B cell (primary cell): ENCODE measurements at regions of chr12 and their contacts with region 1.

Region 1: DNA sequence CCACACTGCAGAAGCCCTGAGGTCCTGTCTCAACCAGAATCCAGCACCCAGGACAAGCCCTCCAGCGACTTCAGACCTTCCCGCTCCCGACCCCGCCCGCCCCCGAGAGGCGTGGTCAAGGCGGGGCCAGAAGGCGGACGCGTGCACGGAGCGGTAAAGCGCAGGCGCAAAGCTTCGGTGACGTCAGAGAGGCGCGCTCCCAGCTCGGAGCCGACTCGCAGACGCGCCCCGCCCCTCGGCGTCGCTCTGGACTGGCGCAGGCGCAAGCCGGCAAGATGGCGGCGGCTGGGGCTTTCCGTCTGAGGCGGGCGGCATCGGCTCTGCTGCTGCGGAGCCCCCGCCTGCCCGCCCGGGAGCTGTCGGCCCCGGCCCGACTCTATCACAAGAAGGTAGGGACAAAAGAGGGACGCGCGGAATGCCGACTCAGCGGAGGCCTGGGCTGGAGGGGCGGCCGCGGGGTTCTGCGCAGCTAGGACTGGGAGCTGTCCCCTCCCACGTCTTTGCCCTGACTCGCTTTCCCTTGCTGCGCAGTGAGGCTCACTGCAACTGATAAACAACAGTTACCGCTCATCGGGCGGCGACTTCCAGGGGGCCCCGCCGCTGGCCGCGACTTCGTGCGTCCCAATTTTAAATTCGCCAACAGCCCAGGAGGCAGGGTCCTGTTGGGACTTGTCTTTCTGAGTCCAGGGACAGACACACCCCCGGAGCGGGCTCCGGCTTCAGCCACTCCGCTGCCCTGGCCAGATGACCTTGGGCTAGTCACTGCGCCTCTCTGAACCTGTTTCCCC is at the start of gene ISCU:
- DNase-seq: peak; percentile 99
- ATAC-seq: peak; percentile 73
- H3K4me3 ChIP-seq: peak within 1 kb of the TSS; percentile 84 to 99 (median 98)
- H3K4me3 Mint-ChIP-seq: peak within 1 kb of the TSS; percentile 100
- H3K27ac ChIP-seq: peak within 1 kb of the TSS; percentile 94 to 97
- H3K27ac Mint-ChIP-seq: peak within 1 kb of the TSS; percentile 100
- H3K4me1 ChIP-seq: peaks cover 53 to 61% of the 10 kb centered on the region in 2 donors
- H3K4me1 Mint-ChIP-seq: peaks cover 72% of the 10 kb centered on the region
- H3K27me3 ChIP-seq: no peaks in the 10 kb centered on the region
- H3K27me3 Mint-ChIP-seq: no peaks in the 10 kb centered on the region
- CTCF ChIP-seq: no peak
- total RNA-seq, gene ISCU: 190 and 209 TPM in 2 replicates

Region 2: GRCh38 chr12:107685360-107686248 is 876.9 kb before region 1 on chr12 and contains the start of gene PWP1:
- CTCF ChIA-PET with region 1: no interaction called
- POLR2A ChIA-PET with region 1: no interaction called
- intact Hi-C with region 1: loop called (anchors 2 kb)
- DNase-seq: peak; percentile 98
- ATAC-seq: peak; percentile 91
- H3K4me3 ChIP-seq: peak within 1 kb of the TSS; percentile 69 to 96 (median 86)
- H3K4me3 Mint-ChIP-seq: peak within 1 kb of the TSS; percentile 96
- H3K27ac ChIP-seq: peak within 1 kb of the TSS; percentile 81 to 85
- H3K27ac Mint-ChIP-seq: peak within 1 kb of the TSS; percentile 98
- H3K4me1 ChIP-seq: peaks cover 16 to 22% of the 10 kb centered on the region in 2 donors
- H3K4me1 Mint-ChIP-seq: peaks cover 25% of the 10 kb centered on the region
- H3K27me3 ChIP-seq: no peaks in the 10 kb centered on the region
- H3K27me3 Mint-ChIP-seq: no peaks in the 10 kb centered on the region
- CTCF ChIP-seq: no peak
- total RNA-seq, gene PWP1: 51.2 and 54.8 TPM in 2 replicates

Region 3: DNA sequence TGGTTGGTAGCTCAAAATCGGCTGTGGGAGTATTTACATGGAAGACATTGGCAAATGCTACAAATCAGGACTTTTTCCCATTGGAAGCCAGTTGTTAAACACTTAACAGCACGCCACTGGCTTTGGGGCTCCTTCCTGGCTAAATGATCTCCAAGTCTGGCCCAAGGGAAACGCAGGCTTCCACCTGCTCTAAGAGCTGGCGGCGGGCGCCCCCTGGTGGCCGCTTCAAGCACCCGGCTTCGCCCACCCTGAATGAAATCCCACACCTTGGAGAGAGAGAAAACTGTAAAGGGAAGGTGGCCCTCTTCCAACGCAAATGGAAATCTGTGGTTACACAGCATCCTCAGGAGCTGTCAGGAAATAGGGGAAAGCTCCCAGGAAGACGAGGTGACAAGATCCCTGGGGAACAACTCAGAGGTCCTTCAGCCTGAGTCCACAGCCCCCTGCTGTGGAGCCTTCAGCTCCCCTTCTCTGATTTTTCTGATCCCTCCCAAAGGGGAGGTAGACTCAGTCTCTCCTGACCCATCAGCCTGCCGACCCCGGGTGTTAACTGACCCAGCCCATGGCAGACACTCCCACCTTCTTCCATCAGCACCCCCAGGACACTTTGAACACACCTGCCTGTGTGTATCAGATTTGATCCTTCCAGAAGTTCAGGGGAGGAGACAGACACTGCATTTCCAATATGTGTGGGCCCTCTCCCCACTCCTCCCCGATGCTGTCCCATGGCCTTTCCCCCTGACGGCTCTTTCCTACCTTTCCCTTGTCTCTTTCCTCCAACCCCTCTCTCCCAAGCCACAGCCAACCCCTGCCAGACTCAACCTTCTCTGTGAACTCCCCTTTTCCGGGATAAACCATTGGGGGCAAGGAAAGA is 55.8 kb after region 1 on chr12:
- CTCF ChIA-PET with region 1: interaction called, 424 read pairs
- POLR2A ChIA-PET with region 1: interaction called, 26 read pairs
- intact Hi-C with region 1: loop called (anchors 1 kb)
- DNase-seq: peak; percentile 88
- ATAC-seq: peak; percentile 35
- H3K4me3 ChIP-seq: no peak overlapping the region
- H3K4me3 Mint-ChIP-seq: no peak overlapping the region
- H3K27ac ChIP-seq: peak overlapping the region; percentile 80 to 93
- H3K27ac Mint-ChIP-seq: peak overlapping the region; percentile 98
- H3K4me1 ChIP-seq: peaks cover 41 to 49% of the 10 kb centered on the region in 2 donors
- H3K4me1 Mint-ChIP-seq: peaks cover 69% of the 10 kb centered on the region
- H3K27me3 ChIP-seq: no peaks in the 10 kb centered on the region
- H3K27me3 Mint-ChIP-seq: no peaks in the 10 kb centered on the region
- CTCF ChIP-seq: peak; percentile 98

Region 4: DNA sequence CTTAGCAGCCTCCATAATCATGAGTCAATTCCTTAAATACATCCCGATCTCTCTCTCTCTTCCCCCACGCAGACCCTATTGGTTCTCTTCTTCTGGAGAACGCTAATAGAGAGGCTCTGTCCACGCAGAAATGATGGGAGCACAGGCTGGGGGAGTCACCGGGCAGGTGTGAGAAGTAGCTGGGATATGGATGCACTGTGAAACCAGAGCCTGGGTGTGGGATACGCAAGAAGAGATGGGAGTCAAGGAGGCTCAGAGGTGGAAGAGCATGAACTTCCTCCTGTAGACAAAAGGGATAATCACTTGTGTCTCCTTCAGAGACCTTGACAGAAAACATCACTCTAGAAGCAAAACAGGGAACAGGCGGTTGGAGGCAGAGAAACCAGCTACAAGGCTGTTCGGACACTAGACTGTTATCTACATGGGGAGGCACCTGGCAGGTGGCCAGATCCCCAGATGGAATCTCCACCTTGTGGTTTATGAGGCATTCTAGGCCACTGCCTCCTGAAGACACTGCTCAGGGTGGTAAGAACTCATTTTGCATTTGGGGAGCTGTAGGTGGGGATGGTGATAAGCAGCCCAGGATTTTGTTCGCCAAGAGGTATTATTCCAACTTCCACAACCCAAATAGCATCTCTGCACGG is 78.4 kb after region 1 on chr12:
- CTCF ChIA-PET with region 1: interaction called, 200 read pairs
- POLR2A ChIA-PET with region 1: interaction called, 51 read pairs
- intact Hi-C with region 1: no loop called
- DNase-seq: peak; percentile 47
- ATAC-seq: no peak
- H3K4me3 ChIP-seq: no peak overlapping the region
- H3K4me3 Mint-ChIP-seq: peak overlapping the region; percentile 65
- H3K27ac ChIP-seq: peak overlapping the region; percentile 78 to 95
- H3K27ac Mint-ChIP-seq: peak overlapping the region; percentile 89
- H3K4me1 ChIP-seq: peaks cover 63 to 70% of the 10 kb centered on the region in 2 donors
- H3K4me1 Mint-ChIP-seq: peaks cover 89% of the 10 kb centered on the region
- H3K27me3 ChIP-seq: no peaks in the 10 kb centered on the region
- H3K27me3 Mint-ChIP-seq: no peaks in the 10 kb centered on the region
- CTCF ChIP-seq: no peak

Region 5: GRCh38 chr12:108856428-108857157 is 294.1 kb after region 1 on chr12:
- CTCF ChIA-PET with region 1: no interaction called
- POLR2A ChIA-PET with region 1: no interaction called
- intact Hi-C with region 1: loop called (anchors 2 kb)
- DNase-seq: peak; percentile 59
- ATAC-seq: peak; percentile 2
- H3K4me3 ChIP-seq: peak overlapping the region; percentile 43 to 76 (median 71)
- H3K4me3 Mint-ChIP-seq: peak overlapping the region; percentile 99
- H3K27ac ChIP-seq: peak overlapping the region in 1 of 2 donors; percentile 56
- H3K27ac Mint-ChIP-seq: peak overlapping the region; percentile 96
- H3K4me1 ChIP-seq: peaks cover 29 to 44% of the 10 kb centered on the region in 2 donors
- H3K4me1 Mint-ChIP-seq: peaks cover 52% of the 10 kb centered on the region
- H3K27me3 ChIP-seq: peaks cover 0 to 4% (median 0%) of the 10 kb centered on the region in 4 experiments
- H3K27me3 Mint-ChIP-seq: no peaks in the 10 kb centered on the region
- CTCF ChIP-seq: no peak

Region 6: GRCh38 chr12:108868781-108869180 is 306.2 kb after region 1 on chr12:
- CTCF ChIA-PET with region 1: no interaction called
- POLR2A ChIA-PET with region 1: no interaction called
- intact Hi-C with region 1: no loop called
- DNase-seq: no peak
- ATAC-seq: no peak
- H3K4me3 ChIP-seq: no peak overlapping the region
- H3K4me3 Mint-ChIP-seq: no peak overlapping the region
- H3K27ac ChIP-seq: no peak overlapping the region
- H3K27ac Mint-ChIP-seq: no peak overlapping the region
- H3K4me1 ChIP-seq: no peaks in the 10 kb centered on the region
- H3K4me1 Mint-ChIP-seq: no peaks in the 10 kb centered on the region
- H3K27me3 ChIP-seq: no peaks in the 10 kb centered on the region
- H3K27me3 Mint-ChIP-seq: no peaks in the 10 kb centered on the region
- CTCF ChIP-seq: no peak

Region 7: DNA sequence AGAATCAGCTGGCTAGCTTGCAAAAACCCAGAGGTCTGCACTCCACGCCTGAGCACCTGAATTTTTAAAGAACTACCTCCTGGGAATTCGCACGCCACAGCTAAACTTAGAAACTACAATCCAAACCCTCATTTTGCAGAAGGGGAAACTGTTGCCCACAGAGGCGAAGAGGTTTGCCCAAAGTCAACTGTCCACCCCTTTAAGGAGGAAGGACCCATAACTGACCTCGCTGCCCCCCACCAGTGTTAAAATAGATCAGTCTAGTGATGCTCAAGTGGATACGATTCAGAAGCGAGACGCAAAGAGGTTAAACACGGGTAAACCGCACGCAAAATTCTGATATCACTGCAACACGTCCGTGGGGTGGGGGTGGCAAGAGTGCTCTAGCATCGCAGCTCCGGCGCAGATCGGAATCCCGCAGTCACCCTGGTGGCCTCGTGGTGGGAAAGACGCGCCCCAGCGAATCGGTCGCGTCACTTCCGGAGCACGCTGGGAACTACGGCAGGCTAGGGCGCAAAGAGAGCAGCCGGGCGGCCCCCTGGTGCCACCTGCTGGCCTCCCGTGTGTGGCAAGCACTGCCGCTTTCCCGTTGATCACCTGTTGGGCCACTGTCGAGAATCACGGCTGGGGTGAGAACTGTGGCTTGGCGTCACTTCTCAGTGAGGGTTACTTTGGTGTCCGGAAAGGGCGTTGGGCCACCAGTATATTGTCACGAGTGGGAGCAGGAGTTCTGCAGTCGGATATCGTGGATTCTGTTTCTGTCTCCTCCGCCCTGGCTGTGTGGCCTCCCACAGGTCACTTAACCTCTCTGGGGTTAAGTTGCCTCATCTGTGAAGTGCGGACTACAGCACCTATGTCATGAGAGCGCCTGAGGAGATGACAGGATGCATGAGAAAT is 530.7 kb after region 1 on chr12 and contains the start of gene ALKBH2:
- CTCF ChIA-PET with region 1: interaction called, 3 read pairs
- POLR2A ChIA-PET with region 1: no interaction called
- intact Hi-C with region 1: loop called (anchors 2 kb)
- DNase-seq: peak; percentile 96
- ATAC-seq: peak; percentile 70
- H3K4me3 ChIP-seq: peak within 1 kb of the TSS; percentile 64 to 98 (median 85)
- H3K4me3 Mint-ChIP-seq: peak within 1 kb of the TSS; percentile 95
- H3K27ac ChIP-seq: peak within 1 kb of the TSS; percentile 58 to 78
- H3K27ac Mint-ChIP-seq: peak within 1 kb of the TSS; percentile 89
- H3K4me1 ChIP-seq: peaks cover 24 to 28% of the 10 kb centered on the region in 2 donors
- H3K4me1 Mint-ChIP-seq: peaks cover 34% of the 10 kb centered on the region
- H3K27me3 ChIP-seq: no peaks in the 10 kb centered on the region
- H3K27me3 Mint-ChIP-seq: no peaks in the 10 kb centered on the region
- CTCF ChIP-seq: peak; percentile 97
- total RNA-seq, gene ALKBH2: 14.5 and 14.6 TPM in 2 replicates

Region 8: DNA sequence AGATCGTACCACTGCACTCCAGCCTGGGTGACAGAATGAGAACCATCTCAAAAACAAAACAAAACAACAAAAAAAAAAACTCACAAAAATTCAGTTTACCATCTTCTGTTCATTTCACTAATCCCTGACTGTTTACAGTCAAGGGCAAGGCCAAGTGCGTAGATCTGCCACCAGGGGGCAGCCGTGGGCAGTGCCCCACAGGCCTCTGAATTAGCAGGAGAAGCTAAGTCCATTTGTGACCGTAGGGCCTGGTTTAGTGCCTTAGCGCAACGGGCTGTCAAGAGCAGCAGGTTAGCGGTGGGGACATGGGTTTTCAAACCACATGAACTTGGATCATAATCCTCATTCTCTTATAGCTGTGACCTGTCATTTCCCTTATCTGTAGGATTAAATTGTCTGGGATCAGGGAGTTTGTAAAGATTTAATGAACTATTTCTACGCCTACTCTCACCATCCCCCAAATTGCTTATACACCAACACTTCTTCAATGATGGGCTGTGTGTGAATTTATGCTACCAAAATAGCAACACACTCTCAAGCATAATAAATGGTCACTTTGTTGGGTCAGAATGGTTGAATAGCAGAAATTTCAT is 865.6 kb after region 1 on chr12:
- CTCF ChIA-PET with region 1: no interaction called
- POLR2A ChIA-PET with region 1: no interaction called
- intact Hi-C with region 1: no loop called
- DNase-seq: peak; percentile 76
- ATAC-seq: peak; percentile 83
- H3K4me3 ChIP-seq: no peak overlapping the region
- H3K4me3 Mint-ChIP-seq: no peak overlapping the region
- H3K27ac ChIP-seq: no peak overlapping the region
- H3K27ac Mint-ChIP-seq: no peak overlapping the region
- H3K4me1 ChIP-seq: peaks cover 4 to 6% of the 10 kb centered on the region in 2 donors
- H3K4me1 Mint-ChIP-seq: peaks cover 6% of the 10 kb centered on the region
- H3K27me3 ChIP-seq: peaks cover 0 to 11% (median 0%) of the 10 kb centered on the region in 4 experiments
- H3K27me3 Mint-ChIP-seq: peaks cover 7% of the 10 kb centered on the region
- CTCF ChIP-seq: peak; percentile 98